Activated CD4-positive, alpha-beta T cell treated with anti-CD3 and anti-CD28 coated beads, Interleukin-2, amount 10 ng/mL, durations not matched to agents 7 days and 5 days (primary cell): ENCODE measurements at regions of chr17 and their contacts with region 1.

Region 1: DNA sequence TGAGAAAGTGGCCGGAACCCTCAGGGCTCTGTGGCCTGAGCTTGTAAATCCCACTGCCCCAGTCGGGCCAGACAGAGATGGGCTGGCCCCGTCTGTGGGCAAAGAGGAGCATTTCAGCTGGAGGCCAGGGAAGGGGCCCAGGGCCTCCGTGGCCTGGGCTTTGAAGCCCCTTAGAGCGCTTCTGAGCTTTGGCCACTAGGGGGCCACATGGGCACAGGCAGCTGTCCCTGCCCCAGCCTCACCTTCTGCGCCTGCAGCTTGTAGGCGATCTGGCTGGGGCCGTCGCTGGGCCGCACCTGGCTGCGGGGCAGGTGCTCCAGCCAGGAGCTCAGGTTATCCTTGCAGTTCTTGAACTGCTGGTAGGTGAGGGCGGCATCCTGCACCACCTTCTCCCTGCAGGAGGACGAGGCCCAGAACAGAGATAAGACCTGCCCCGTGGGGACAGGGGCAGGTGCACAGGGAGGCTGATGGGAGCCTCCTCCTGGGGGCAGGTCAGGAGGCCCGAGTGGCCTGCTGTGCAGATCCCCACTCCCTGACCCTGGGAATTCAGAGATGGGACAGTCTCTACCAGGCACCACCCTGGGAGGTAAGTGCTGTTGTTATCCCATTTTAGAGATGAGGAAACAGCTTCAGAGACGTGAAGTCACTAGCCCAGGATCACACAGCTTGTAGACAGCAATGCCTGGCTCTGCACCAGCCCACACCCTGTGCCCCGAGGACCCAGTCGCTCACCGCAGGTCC is 12.8 kb downstream of the EVPL start:
- DNase-seq: peak; percentile 84
- H3K4me3 Mint-ChIP-seq: no peak overlapping the region
- H3K27ac Mint-ChIP-seq: peak overlapping the region; percentile 62
- H3K4me1 Mint-ChIP-seq: peaks cover 5% of the 10 kb centered on the region
- H3K27me3 Mint-ChIP-seq: no peaks in the 10 kb centered on the region

Region 2: DNA sequence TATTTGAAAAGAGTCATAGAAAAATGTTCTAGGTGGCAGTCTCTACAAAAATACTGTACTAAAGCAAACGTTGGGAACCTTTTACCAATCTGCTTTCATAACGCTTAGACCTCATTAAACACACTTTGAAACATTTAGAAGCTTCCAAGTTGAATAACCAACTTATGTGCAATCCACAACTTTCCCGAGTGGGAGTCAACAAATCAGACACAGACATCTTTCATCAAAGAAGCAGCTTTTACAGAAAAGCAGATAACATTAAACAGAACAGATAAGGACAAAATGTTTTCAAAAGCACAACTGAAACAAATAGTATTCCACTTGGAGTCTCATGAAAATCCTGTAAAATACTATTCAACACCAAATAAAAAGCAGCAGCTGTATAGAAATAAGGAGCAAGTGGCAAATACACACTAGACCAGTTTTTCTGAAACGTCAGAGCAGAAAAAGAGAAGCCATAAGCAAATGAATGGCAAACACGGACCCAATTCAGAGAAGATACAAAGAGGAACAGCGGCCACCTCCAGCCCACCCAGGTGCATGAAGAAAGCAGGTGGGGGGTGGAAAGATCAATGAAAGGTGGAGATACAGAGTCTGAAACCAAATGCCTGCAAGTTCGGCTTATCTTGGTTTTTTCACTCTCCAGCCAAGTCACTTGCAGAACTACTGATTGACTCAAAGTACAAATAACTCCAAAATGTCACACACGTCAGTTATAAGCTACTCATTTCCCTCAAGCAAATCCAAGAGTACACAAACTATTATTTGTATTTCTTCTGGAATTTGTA is 55.1 kb before region 1 on chr17:
- CTCF ChIA-PET with region 1: no interaction called
- POLR2A ChIA-PET with region 1: no interaction called
- DNase-seq: no peak
- H3K4me3 Mint-ChIP-seq: no peak overlapping the region
- H3K27ac Mint-ChIP-seq: no peak overlapping the region
- H3K4me1 Mint-ChIP-seq: peaks cover 3% of the 10 kb centered on the region
- H3K27me3 Mint-ChIP-seq: no peaks in the 10 kb centered on the region

Region 3: GRCh38 chr17:76000016-76000754 is 14.2 kb before region 1 on chr17:
- CTCF ChIA-PET with region 1: interaction called, 31 read pairs
- POLR2A ChIA-PET with region 1: interaction called, 5 read pairs
- DNase-seq: peak; percentile 71
- H3K4me3 Mint-ChIP-seq: no peak overlapping the region
- H3K27ac Mint-ChIP-seq: no peak overlapping the region
- H3K4me1 Mint-ChIP-seq: peaks cover 20% of the 10 kb centered on the region
- H3K27me3 Mint-ChIP-seq: no peaks in the 10 kb centered on the region

Region 4: GRCh38 chr17:76026714-76027158 is 12.4 kb after region 1 on chr17:
- CTCF ChIA-PET with region 1: interaction called, 14 read pairs
- POLR2A ChIA-PET with region 1: no interaction called
- DNase-seq: no peak
- H3K4me3 Mint-ChIP-seq: no peak overlapping the region
- H3K27ac Mint-ChIP-seq: no peak overlapping the region
- H3K4me1 Mint-ChIP-seq: peaks cover 11% of the 10 kb centered on the region
- H3K27me3 Mint-ChIP-seq: no peaks in the 10 kb centered on the region

Region 5: DNA sequence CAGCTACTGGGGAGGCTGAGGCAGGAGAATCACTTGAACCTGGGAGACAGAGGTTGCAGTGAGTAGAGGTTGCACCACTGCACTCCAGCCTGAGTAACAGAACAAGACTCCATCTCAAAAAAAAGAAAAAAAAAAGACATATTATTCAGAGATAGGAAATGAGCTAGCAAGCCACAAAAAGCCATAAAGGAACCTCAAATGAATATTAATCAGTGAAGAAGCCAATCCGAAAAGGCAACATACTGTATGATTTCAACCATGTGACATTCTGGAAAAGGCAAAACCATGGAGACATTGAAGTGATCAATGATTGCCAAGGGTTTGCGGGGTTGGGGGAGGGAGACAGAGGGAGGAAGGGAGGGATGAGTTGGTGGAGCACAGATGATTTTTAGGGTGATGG is 97.6 kb after region 1 on chr17:
- CTCF ChIA-PET with region 1: no interaction called
- POLR2A ChIA-PET with region 1: no interaction called
- DNase-seq: no peak
- H3K4me3 Mint-ChIP-seq: no peak overlapping the region
- H3K27ac Mint-ChIP-seq: no peak overlapping the region
- H3K4me1 Mint-ChIP-seq: no peaks in the 10 kb centered on the region
- H3K27me3 Mint-ChIP-seq: no peaks in the 10 kb centered on the region